Activated T-helper 1 cell treated with anti-CD3 and anti-CD28 coated beads, Interleukin-12 subunit alpha, Interleukin-12 subunit beta, Interleukin-2, Interleukin-4 antibody, amounts not matched to agents 30 ng/mL and 10 ng/mL and 1 ng/mL, durations not matched to agents 14 hours and 24 hours and 36 hours (primary cell): ENCODE measurements at regions of chr10 and their contacts with region 1.

Region 1: DNA sequence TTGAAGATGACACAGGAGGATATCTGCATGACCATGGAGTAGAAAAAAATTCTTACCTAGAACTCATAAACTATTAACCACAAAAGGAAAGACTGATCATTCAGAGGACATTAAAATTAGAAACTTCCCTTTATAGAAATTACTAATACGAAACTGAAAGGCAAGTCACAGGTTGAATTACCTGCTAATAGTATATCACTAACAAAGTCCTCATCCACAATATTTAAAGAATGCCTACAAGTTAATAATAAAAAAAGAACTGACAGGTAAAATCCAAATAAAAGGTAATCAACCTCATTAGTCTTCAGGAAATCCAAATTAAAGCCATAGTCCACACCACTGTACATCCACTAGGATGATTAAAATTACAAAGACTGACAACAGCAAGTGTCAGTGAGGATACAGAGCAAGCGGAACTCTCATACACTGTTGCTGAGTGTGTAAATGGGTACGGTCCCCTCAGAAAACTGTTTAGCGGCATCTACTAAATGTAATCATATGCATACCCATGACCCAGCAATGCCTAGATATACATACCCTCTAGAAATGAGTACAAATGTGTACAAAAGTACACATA is 71.2 kb downstream of the ARHGAP21 start:
- DNase-seq: no peak
- H3K4me3 Mint-ChIP-seq: no peak overlapping the region
- H3K27ac Mint-ChIP-seq: no peak overlapping the region
- H3K4me1 Mint-ChIP-seq: peaks cover 10% of the 10 kb centered on the region
- H3K27me3 Mint-ChIP-seq: no peaks in the 10 kb centered on the region

Region 2: GRCh38 chr10:24706479-24707118 is 54.1 kb after region 1 on chr10:
- intact Hi-C with region 1: loop called (anchors 5 kb)
- DNase-seq: peak; percentile 26
- H3K4me3 Mint-ChIP-seq: no peak overlapping the region
- H3K27ac Mint-ChIP-seq: no peak overlapping the region
- H3K4me1 Mint-ChIP-seq: peaks cover 23% of the 10 kb centered on the region
- H3K27me3 Mint-ChIP-seq: no peaks in the 10 kb centered on the region